Uterus (tissue), 4 donors: ENCODE measurements at regions of chr3 and their contacts with region 1.

Region 1: GRCh38 chr3:47522082-47522987 is 8.8 kb upstream of the ELP6 start:
- DNase-seq: peak; percentile 71 to 86
- H3K4me3 ChIP-seq: no peak overlapping the region
- H3K27ac ChIP-seq: no peak overlapping the region
- H3K4me1 ChIP-seq: no peaks in the 10 kb centered on the region
- H3K27me3 ChIP-seq: no peaks in the 10 kb centered on the region
- CTCF ChIP-seq: peak; percentile 92 to 96 (median 94)
- POLR2A ChIP-seq: no peak

Region 2: GRCh38 chr3:47098910-47099309 is 423.4 kb before region 1 on chr3:
- intact Hi-C with region 1: no loop called
- DNase-seq: no peak
- H3K4me3 ChIP-seq: no peak overlapping the region
- H3K27ac ChIP-seq: no peak overlapping the region
- H3K4me1 ChIP-seq: no peaks in the 10 kb centered on the region
- H3K27me3 ChIP-seq: no peaks in the 10 kb centered on the region
- CTCF ChIP-seq: no peak
- POLR2A ChIP-seq: no peak

Region 3: DNA sequence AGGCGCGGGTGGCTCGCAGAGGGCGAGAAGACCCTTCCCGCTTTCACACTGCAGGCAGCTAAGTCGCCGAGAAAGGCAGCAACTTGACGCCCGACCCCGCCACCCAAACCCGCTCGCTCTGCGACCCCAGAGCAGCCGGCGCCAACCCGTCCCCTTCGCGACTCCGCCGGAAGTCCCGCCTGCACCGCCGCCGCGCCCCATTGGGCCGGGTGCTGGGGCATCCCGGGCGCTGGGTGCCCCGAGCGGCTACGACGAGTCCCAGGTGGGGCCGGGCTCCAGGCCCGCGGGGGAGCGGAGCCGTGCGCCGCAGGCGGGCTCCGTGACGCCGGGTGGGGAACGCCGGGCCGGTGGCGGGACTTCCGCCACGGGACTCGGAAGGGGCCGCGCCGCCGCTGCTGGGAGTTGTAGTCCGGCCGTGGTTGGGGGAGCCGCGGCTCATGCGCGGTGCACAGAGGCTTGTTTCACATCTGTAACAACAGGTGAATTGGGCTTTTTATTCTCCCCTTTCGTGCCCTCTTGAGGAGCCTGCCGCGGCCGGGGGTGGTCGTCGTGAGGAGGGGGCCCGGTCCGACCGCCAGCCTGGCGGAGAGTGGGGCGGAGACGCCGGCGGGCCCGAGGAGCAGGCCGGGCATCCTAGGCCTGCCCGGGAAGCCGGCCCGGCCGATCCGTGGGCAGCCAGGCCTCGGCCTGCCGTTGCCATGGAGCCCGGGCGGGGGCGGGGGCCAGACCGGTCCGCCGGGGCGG is 280.6 kb after region 1 on chr3 and contains the start of gene DHX30:
- intact Hi-C with region 1: loop called (anchors 5 kb)
- DNase-seq: peak; percentile 83 to 88
- H3K4me3 ChIP-seq: peak within 1 kb of the TSS; percentile 73 to 98
- H3K27ac ChIP-seq: peak within 1 kb of the TSS; percentile 92 to 100
- H3K4me1 ChIP-seq: peaks cover 6 to 8% of the 10 kb centered on the region in 2 donors
- H3K27me3 ChIP-seq: no peaks in the 10 kb centered on the region
- CTCF ChIP-seq: peak in 1 of 4 experiments; percentile 7
- POLR2A ChIP-seq: peak; percentile 57 to 86
- total RNA-seq, gene DHX30: 21.5 to 78.6 (median 55.7) TPM

Region 4: DNA sequence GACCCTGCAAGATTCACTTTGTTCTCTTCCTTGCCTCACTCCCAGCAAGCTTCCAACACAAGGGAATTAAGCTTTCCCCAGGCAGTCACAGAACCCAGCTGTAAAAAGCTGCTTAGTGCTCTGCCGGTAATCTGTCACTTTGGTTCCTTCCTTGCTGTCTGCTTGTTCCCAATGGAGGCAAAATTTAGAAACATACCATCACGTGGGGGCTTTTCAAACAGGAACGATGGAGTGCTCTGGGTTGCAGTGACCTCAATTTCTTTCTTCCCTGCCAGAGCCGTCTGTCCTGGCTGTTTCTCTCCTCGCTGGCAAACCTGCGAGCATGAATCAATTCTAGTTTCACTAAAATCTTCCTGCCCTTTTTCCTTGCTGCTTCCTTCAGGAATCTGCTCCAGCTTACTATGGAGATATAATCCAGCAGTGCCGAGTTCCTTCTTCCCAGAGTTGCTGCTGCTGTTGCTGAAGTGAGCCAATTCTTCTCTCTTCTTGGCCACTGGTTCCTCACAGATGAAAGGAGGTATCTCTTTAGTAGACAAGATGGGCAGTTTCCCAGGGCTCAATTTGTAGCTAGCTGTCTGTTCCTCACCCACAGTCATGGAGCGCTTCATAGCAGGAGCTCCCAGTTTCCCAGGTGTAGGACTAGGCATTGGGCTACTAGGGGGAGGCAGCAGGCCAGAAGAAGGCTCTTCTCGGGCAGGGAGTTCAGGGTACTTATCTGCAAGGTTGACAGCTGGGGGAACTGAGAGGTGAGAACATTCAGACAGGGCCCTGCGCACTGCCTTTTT is 368.7 kb after region 1 on chr3:
- intact Hi-C with region 1: no loop called
- DNase-seq: peak; percentile 66 to 81
- H3K4me3 ChIP-seq: no peak overlapping the region
- H3K27ac ChIP-seq: peak overlapping the region; percentile 58 to 82
- H3K4me1 ChIP-seq: peaks cover 5 to 7% of the 10 kb centered on the region in 2 donors
- H3K27me3 ChIP-seq: no peaks in the 10 kb centered on the region
- CTCF ChIP-seq: no peak
- POLR2A ChIP-seq: no peak

Region 5: GRCh38 chr3:48429317-48429959 is 907.1 kb after region 1 on chr3:
- intact Hi-C with region 1: no loop called
- DNase-seq: peak; percentile 62 to 68
- H3K4me3 ChIP-seq: peak overlapping the region; percentile 61 to 62
- H3K27ac ChIP-seq: peak overlapping the region; percentile 91 to 97
- H3K4me1 ChIP-seq: peaks cover 11 to 13% of the 10 kb centered on the region in 2 donors
- H3K27me3 ChIP-seq: no peaks in the 10 kb centered on the region
- CTCF ChIP-seq: peak in 1 of 4 experiments; percentile 7
- POLR2A ChIP-seq: peak; percentile 3 to 52